ENCODE measurements at regions of chr1 and their contacts with region 1.

Region 1: DNA sequence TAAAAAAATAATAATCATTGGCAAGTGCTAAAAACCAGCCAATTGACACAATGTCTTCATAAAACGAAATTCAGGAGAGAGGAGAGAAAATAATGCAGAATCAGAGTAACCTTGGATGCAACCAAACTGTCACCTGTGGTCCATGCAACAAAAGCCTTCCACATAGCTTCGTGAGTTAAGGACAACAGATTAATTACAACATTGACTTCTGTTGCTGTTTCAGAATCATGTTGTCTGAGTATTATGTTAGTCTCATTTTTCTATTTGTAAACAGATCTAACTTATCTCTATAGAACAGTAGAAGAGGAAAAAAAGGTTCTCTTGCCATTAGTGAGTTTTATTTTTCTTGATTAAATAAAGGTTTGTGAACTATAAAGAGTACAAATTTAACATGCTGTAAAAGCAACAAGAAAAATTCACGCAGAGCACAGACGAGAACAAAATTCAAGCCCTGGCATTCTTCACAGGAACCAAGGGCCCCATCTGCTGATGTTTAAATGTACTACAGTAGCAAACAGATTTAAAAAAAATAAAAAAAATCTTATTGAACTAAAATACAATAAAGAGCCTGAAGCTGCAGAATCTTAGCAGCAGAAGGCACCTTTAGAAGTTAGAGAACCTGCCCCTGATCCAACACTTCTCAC is 381.1 kb upstream of the PKN2 start:
- DNase-seq: no peak
- H3K4me3 ChIP-seq: no peak overlapping the region
- H3K27ac ChIP-seq: no peak overlapping the region
- H3K4me1 ChIP-seq: peaks cover 0 to 4% (median 0%) of the 10 kb centered on the region in 4 donors
- H3K27me3 ChIP-seq: no peaks in the 10 kb centered on the region
- CTCF ChIP-seq: peak in 4 of 5 experiments; percentile 44 to 57 (median 50)
- EP300 ChIP-seq: no peak
- POLR2A ChIP-seq: no peak

Region 2: GRCh38 chr1:88001460-88001859 is 301.5 kb before region 1 on chr1:
- in situ Hi-C with region 1: no loop called
- intact Hi-C with region 1: no loop called
- DNase-seq: no peak
- H3K4me3 ChIP-seq: no peak overlapping the region
- H3K27ac ChIP-seq: no peak overlapping the region
- H3K4me1 ChIP-seq: no peaks in the 10 kb centered on the region
- H3K27me3 ChIP-seq: no peaks in the 10 kb centered on the region
- CTCF ChIP-seq: no peak
- EP300 ChIP-seq: no peak
- POLR2A ChIP-seq: no peak

Region 3: GRCh38 chr1:88180449-88181108 is 122.4 kb before region 1 on chr1:
- in situ Hi-C with region 1: loop called in 1 of 4 experiments (anchors 25 kb)
- intact Hi-C with region 1: loop called (anchors 5 kb)
- DNase-seq: peak; percentile 83
- H3K4me3 ChIP-seq: no peak overlapping the region
- H3K27ac ChIP-seq: no peak overlapping the region
- H3K4me1 ChIP-seq: peaks cover 0 to 8% (median 0%) of the 10 kb centered on the region in 4 donors
- H3K27me3 ChIP-seq: no peaks in the 10 kb centered on the region
- CTCF ChIP-seq: peak; percentile 78 to 91 (median 86)
- EP300 ChIP-seq: no peak
- POLR2A ChIP-seq: no peak

Region 4: DNA sequence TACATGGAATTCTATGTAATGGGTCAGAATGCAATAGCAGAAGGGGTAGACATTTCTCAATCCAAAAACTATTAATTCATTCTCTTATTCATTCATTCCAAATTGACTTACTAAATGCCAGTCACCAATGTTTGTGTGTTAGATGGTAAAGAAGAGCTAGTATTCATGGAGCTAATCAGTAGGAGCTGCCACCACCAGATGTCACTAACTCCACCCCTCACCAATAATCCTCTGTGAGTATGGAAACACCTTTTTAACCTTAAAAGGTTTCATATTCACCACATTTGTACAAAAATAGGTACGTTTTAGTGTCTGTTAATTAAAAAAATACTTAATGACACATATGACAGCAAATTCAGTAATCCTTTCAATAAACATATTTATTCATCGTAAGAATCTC is 249.3 kb after region 1 on chr1:
- in situ Hi-C with region 1: no loop called
- intact Hi-C with region 1: loop called (anchors 5 kb)
- DNase-seq: no peak
- H3K4me3 ChIP-seq: no peak overlapping the region
- H3K27ac ChIP-seq: no peak overlapping the region
- H3K4me1 ChIP-seq: no peaks in the 10 kb centered on the region
- H3K27me3 ChIP-seq: no peaks in the 10 kb centered on the region
- CTCF ChIP-seq: no peak
- EP300 ChIP-seq: no peak
- POLR2A ChIP-seq: no peak

Region 5: DNA sequence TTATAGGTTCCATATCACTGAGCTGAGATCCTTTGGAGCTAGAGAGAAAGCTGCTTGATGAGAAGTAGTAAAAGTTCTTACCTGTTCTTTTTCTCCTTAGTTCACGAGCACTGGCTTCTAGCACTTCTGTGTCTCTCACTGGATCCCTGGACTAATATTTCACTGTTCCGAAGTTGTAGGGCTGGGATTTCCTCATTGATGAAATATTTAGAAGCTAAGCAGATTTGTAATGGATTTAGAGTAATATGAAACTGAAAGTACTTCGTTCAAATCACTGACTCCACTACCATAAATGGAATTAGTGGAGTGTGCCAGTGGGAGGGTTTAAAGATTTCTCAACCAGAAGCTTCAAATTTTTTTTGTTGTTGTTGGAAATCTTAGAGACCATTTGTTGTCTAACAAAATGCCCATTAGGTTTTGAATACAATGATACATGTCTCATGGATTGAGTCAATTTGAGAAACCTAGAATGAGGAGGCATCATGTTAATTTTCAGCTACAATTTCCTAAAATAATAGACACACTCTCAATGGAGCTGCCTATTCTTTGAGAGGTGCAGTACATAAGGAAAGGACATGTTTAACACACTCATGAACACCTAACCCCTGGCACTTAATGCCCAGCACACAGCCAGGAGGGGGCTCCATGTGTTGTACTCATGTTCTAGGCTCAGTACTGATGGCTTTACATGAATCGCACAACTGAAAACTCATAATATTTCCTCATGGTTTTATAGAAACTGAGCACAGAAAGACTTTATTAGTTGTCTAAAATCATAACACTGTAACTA is 762.3 kb after region 1 on chr1 and contains the start of gene GBP1:
- in situ Hi-C with region 1: no loop called
- intact Hi-C with region 1: no loop called
- DNase-seq: no peak
- H3K4me3 ChIP-seq: peak within 1 kb of the TSS; percentile 25 to 58 (median 42)
- H3K27ac ChIP-seq: peak within 1 kb of the TSS; percentile 79 to 87 (median 86)
- H3K4me1 ChIP-seq: peaks cover 0 to 45% (median 5%) of the 10 kb centered on the region in 4 donors
- H3K27me3 ChIP-seq: no peaks in the 10 kb centered on the region
- CTCF ChIP-seq: no peak
- EP300 ChIP-seq: no peak
- POLR2A ChIP-seq: peak; percentile 50
- total RNA-seq, gene GBP1: 3.0 to 50.2 (median 23.2) TPM